CD8-positive, alpha-beta T cell (primary cell): ENCODE measurements at regions of chr19 and their contacts with region 1.

Region 1: GRCh38 chr19:19224852-19225494 is 13.2 kb downstream of the NCAN start:
- DNase-seq: peak; percentile 50 to 86 (median 77)
- ATAC-seq: peak; percentile 96
- H3K4me3 ChIP-seq: peak overlapping the region; percentile 36 to 37
- H3K4me3 Mint-ChIP-seq: peak overlapping the region; percentile 80
- H3K27ac ChIP-seq: no peak overlapping the region
- H3K27ac Mint-ChIP-seq: no peak overlapping the region
- H3K4me1 ChIP-seq: peaks cover 9% of the 10 kb centered on the region
- H3K4me1 Mint-ChIP-seq: no peaks in the 10 kb centered on the region
- H3K27me3 ChIP-seq: peaks cover 0 to 2% of the 10 kb centered on the region in 2 experiments
- H3K27me3 Mint-ChIP-seq: peaks cover 13% of the 10 kb centered on the region
- CTCF ChIP-seq: peak; percentile 78

Region 2: DNA sequence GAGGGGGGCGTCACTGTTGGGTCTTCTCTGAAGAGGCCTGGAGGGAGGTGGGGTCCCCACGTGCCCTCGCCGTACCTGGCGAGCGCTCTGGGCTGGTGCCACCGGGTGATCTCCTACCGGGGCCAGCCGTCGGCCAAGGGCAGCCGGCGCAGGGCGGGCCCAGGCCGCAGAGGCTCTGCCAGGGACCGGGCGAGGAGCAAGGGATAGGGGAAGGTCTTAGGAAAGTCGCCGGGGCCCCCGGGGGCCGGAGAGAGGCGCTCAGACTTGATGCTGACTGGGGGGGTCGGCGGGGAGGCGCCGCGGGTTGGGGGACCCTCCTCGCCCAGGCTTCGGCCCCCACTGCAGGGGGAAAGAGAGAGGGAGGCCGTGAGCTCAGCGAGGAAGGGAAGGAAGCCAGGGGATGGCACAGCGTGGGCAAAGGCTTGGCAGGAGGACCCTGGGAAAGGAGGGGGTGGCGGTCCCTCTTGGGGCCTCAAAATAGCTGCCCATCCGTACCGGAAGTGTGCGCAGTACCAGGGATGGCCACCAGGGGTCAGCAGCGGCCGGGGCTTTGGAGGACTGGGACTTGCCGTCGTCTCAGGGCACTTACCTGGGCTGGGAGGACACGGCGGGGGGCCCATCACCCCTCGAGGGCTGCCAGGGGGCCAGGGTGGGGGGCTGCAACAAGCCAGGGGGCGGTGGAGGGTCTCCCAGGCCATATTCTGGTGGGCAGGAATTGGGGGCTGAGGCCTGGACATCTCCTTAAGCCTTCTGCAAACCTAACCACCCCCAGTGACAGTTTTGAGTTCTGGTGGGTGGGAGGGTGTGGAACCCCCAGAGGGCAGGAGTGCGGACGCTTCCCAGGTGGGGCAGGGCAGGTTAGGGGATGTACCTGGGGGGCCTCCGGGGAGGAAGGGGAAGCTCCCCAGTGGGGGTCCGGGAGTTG is 79.0 kb before region 1 on chr19:
- CTCF ChIA-PET with region 1: interaction called, 26 read pairs
- POLR2A ChIA-PET with region 1: no interaction called
- intact Hi-C with region 1: loop called (anchors 1 kb)
- DNase-seq: peak; percentile 75 to 92 (median 82)
- ATAC-seq: peak; percentile 100
- H3K4me3 ChIP-seq: no peak overlapping the region
- H3K4me3 Mint-ChIP-seq: no peak overlapping the region
- H3K27ac ChIP-seq: no peak overlapping the region
- H3K27ac Mint-ChIP-seq: no peak overlapping the region
- H3K4me1 ChIP-seq: no peaks in the 10 kb centered on the region
- H3K4me1 Mint-ChIP-seq: no peaks in the 10 kb centered on the region
- H3K27me3 ChIP-seq: no peaks in the 10 kb centered on the region
- H3K27me3 Mint-ChIP-seq: no peaks in the 10 kb centered on the region
- CTCF ChIP-seq: peak; percentile 75

Region 3: DNA sequence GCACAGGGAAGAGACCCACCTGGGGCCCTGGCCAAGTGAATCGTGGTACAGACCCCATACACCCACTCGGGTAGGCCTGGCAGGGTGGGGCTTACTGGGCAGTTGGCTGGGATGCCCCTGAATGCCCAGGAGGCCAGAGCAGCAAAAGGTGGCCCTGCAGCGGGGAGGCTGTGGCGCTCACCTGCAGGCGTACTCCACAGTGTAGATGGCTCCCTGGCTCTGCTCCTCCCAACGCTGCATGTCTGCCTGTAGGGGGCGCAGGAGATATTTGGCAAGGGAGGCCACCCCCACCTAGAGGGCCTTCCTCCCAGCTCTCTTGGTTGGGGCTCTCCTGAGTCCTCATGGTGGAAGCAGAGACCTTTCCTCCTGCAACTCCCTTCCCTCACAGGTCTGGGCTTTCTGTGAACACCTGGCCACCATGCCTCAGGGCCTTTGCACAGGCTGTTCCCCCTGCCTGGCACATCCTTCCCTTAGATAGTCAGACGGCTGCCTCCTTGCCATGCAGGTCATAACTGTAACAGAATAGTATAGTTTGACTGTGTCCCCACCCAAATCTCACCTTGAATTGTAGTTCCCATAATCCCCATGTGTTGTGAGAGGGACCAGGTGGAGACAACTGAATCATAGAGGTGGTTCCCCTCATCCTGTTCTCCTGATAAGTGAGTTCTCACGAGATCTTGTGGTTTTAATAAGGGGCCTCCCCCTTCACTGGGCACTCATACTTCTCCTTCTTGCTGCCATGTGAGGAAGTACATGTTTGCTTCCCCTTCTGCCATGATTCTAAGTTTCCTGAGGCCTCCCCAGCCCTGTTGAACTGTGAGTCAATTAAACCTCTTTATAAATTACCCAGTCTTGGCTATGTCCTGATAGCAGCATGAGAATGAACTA is 38.9 kb before region 1 on chr19:
- CTCF ChIA-PET with region 1: interaction called, 14 read pairs
- POLR2A ChIA-PET with region 1: no interaction called
- intact Hi-C with region 1: loop called in 1 of 2 experiments (anchors 1 kb)
- DNase-seq: peak; percentile 16 to 78 (median 65)
- ATAC-seq: peak; percentile 96
- H3K4me3 ChIP-seq: no peak overlapping the region
- H3K4me3 Mint-ChIP-seq: no peak overlapping the region
- H3K27ac ChIP-seq: no peak overlapping the region
- H3K27ac Mint-ChIP-seq: peak overlapping the region; percentile 21
- H3K4me1 ChIP-seq: peaks cover 24% of the 10 kb centered on the region
- H3K4me1 Mint-ChIP-seq: peaks cover 32% of the 10 kb centered on the region
- H3K27me3 ChIP-seq: no peaks in the 10 kb centered on the region
- H3K27me3 Mint-ChIP-seq: no peaks in the 10 kb centered on the region
- CTCF ChIP-seq: peak; percentile 57

Region 4: GRCh38 chr19:19538061-19538784 is 313.2 kb after region 1 on chr19 and contains the start of gene CILP2:
- CTCF ChIA-PET with region 1: no interaction called
- POLR2A ChIA-PET with region 1: no interaction called
- intact Hi-C with region 1: no loop called
- DNase-seq: peak in 5 of 9 experiments; percentile 48 to 66 (median 64)
- ATAC-seq: no peak
- H3K4me3 ChIP-seq: peak within 1 kb of the TSS; percentile 15 to 34
- H3K4me3 Mint-ChIP-seq: peak within 1 kb of the TSS; percentile 67
- H3K27ac ChIP-seq: no peak within 1 kb of the TSS
- H3K27ac Mint-ChIP-seq: peak within 1 kb of the TSS; percentile 41
- H3K4me1 ChIP-seq: peaks cover 39% of the 10 kb centered on the region
- H3K4me1 Mint-ChIP-seq: peaks cover 27% of the 10 kb centered on the region
- H3K27me3 ChIP-seq: peaks cover 0 to 2% of the 10 kb centered on the region in 2 experiments
- H3K27me3 Mint-ChIP-seq: no peaks in the 10 kb centered on the region
- CTCF ChIP-seq: no peak
- total RNA-seq, gene CILP2: 0.71 to 0.81 TPM